PC-9 (cell line): ENCODE measurements at regions of chr15 and their contacts with region 1.

Region 1: DNA sequence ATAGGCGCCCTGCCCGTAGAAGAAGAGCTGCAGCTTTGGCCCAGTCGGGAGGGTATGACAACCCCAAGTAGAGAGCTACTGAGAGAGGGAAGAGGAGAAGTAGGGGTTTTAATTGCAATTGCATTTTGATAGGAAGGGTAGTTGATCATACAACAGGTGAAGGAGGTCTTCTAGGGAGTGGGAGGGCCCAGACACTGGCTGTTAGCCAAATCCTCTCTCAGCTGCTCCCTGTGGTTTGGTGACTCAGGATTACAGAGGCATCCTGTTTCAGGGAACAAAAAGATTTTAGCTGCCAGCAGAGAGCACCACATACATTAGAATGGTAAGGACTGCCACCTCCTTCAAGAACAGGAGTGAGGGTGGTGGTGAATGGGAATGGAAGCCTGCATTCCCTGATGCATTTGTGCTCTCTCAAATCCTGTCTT is 408.9 kb upstream of the THBS1 start:
- DNase-seq: peak; percentile 85 to 88
- H3K4me3 ChIP-seq: no peak overlapping the region
- H3K27ac ChIP-seq: peak overlapping the region; percentile 34; the same call in 1 of the 2 replicates
- H3K4me1 ChIP-seq: peaks cover 12% of the 10 kb centered on the region
- H3K27me3 ChIP-seq: no peaks in the 10 kb centered on the region
- CTCF ChIP-seq: peak; percentile 66

Region 2: GRCh38 chr15:38817427-38818156 is 354.4 kb before region 1 on chr15:
- CTCF ChIA-PET with region 1: no interaction called
- POLR2A ChIA-PET with region 1: interaction called, 9 read pairs
- intact Hi-C with region 1: loop called (anchors 1 kb)
- DNase-seq: peak; percentile 56 to 93
- H3K4me3 ChIP-seq: no peak overlapping the region
- H3K27ac ChIP-seq: no peak overlapping the region
- H3K4me1 ChIP-seq: no peaks in the 10 kb centered on the region
- H3K27me3 ChIP-seq: no peaks in the 10 kb centered on the region
- CTCF ChIP-seq: peak; percentile 93

Region 3: GRCh38 chr15:38941399-38941953 is 230.5 kb before region 1 on chr15:
- CTCF ChIA-PET with region 1: no interaction called
- POLR2A ChIA-PET with region 1: no interaction called
- intact Hi-C with region 1: no loop called
- DNase-seq: peak; percentile 6 to 40
- H3K4me3 ChIP-seq: no peak overlapping the region
- H3K27ac ChIP-seq: no peak overlapping the region
- H3K4me1 ChIP-seq: peaks cover 21% of the 10 kb centered on the region
- H3K27me3 ChIP-seq: no peaks in the 10 kb centered on the region
- CTCF ChIP-seq: no peak

Region 4: DNA sequence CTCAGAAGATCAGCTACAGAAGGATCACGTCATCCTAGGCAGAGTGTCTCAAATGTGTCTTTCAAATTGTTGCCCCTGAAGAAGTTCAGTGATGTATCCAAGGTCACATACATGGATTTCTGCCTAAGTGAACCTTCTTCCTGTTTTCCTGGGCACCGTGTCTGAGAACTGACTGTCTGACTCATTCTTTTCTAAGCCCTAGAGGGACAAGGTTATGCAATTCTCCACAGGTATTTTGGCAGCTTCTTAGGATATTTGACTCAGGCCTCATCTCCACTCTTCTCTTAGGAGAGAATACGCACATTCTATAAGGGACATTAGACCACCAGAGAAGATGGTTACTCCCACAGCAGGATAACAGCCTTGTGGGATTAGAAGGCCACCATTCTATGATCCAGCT is 17.0 kb after region 1 on chr15:
- CTCF ChIA-PET with region 1: no interaction called
- POLR2A ChIA-PET with region 1: no interaction called
- intact Hi-C with region 1: loop called (anchors 1 kb)
- DNase-seq: peak; percentile 36 to 85
- H3K4me3 ChIP-seq: no peak overlapping the region
- H3K27ac ChIP-seq: peak overlapping the region; percentile 52
- H3K4me1 ChIP-seq: peaks cover 35% of the 10 kb centered on the region
- H3K27me3 ChIP-seq: no peaks in the 10 kb centered on the region
- CTCF ChIP-seq: no peak

Region 5: DNA sequence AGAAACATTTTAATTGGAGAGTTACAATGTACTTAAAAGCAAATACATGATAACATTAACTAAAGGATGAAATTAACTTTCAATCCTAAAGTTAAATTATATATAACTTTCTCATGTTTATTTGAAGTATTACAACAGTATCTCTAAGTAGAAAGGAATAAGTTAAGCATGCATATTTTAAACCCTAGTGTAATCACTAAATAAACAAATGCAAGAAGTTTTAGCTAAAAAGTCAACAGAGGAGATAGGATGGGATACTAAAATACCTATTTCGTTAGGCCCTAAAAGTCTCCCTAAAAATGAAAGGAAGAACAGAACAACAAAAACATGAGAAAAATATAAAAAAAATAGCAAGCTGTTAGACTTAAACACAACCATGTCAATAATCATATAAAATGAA is 47.7 kb after region 1 on chr15:
- CTCF ChIA-PET with region 1: no interaction called
- POLR2A ChIA-PET with region 1: no interaction called
- intact Hi-C with region 1: no loop called
- DNase-seq: no peak
- H3K4me3 ChIP-seq: no peak overlapping the region
- H3K27ac ChIP-seq: no peak overlapping the region
- H3K4me1 ChIP-seq: no peaks in the 10 kb centered on the region
- H3K27me3 ChIP-seq: no peaks in the 10 kb centered on the region
- CTCF ChIP-seq: no peak

Region 6: DNA sequence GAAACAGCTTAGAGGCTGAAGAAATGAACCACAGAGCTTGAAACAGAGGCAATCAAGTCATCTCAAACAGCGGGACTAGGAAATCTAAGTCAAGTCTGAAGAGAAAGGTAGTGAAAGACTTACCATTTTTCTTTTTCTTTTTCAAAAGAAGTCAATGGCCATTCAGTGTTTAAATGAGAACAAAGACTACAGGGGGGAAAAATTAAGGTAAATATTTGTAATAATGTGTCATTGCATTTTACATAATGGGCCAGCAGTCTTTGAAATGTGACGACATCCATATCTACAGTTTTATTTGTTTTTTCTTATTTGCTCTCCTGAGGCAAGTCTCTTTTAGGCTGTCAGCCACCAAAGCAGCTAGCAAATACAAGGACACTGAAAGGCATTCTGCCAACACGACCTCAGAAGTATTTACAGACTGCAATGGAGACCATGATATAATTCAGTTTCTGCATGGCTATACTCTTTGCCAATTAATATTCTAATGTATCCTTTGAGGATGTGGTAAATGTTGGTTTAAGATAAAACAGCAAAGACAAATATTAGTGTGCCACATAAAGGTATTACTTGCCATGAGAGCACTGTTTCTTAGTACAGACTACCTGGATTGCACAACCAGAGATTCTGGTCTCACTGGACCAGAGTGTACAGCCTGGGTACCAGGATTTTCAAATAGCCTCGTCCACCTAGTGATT is 101.9 kb after region 1 on chr15:
- CTCF ChIA-PET with region 1: no interaction called
- POLR2A ChIA-PET with region 1: no interaction called
- intact Hi-C with region 1: loop called (anchors 5 kb)
- DNase-seq: peak; percentile 44 to 97
- H3K4me3 ChIP-seq: no peak overlapping the region
- H3K27ac ChIP-seq: peak overlapping the region; percentile 46; the same call in 1 of the 2 replicates
- H3K4me1 ChIP-seq: peaks cover 21% of the 10 kb centered on the region
- H3K27me3 ChIP-seq: no peaks in the 10 kb centered on the region
- CTCF ChIP-seq: no peak

Region 7: DNA sequence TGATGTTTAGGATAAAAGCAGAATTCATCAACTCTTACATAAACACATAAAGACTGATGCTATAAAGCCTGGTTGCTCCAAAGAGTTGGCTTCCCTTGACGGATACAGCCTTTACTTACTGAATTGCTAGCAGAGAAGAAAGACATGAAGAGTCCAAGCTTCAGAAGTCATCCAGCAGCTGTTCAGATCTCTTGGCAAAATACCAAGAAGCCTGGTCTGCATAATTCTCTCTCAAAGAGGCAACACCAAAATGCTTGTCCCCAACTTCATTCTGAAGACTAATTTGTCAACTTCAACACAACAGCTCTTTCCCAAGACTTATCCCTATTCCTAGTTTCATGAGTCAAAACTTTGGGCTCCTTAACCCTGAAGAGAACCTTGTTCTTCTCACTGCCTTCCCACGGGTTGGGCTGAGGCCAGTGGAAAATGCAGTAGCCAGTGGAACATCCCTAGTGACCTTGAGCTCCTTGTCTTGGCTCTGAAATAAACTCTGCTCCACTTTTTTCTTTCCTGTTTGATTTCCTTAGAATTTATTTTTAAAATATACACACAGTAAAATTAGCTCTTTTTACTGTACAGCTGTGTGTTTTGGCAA is 289.7 kb after region 1 on chr15:
- CTCF ChIA-PET with region 1: no interaction called
- POLR2A ChIA-PET with region 1: no interaction called
- intact Hi-C with region 1: no loop called
- DNase-seq: no peak
- H3K4me3 ChIP-seq: no peak overlapping the region
- H3K27ac ChIP-seq: no peak overlapping the region
- H3K4me1 ChIP-seq: no peaks in the 10 kb centered on the region
- H3K27me3 ChIP-seq: no peaks in the 10 kb centered on the region
- CTCF ChIP-seq: no peak

Region 8: GRCh38 chr15:39666677-39667076 is 494.7 kb after region 1 on chr15:
- CTCF ChIA-PET with region 1: no interaction called
- POLR2A ChIA-PET with region 1: interaction called, 12 read pairs
- intact Hi-C with region 1: no loop called
- DNase-seq: no peak
- H3K4me3 ChIP-seq: no peak overlapping the region
- H3K27ac ChIP-seq: no peak overlapping the region
- H3K4me1 ChIP-seq: 0 out of 2 replicates have a peak, but pooled peaks cover 4% of the 10 kb centered on the region
- H3K27me3 ChIP-seq: no peaks in the 10 kb centered on the region
- CTCF ChIP-seq: no peak